ENCODE measurements at regions of chr11 and their contacts with region 1.

Region 1: DNA sequence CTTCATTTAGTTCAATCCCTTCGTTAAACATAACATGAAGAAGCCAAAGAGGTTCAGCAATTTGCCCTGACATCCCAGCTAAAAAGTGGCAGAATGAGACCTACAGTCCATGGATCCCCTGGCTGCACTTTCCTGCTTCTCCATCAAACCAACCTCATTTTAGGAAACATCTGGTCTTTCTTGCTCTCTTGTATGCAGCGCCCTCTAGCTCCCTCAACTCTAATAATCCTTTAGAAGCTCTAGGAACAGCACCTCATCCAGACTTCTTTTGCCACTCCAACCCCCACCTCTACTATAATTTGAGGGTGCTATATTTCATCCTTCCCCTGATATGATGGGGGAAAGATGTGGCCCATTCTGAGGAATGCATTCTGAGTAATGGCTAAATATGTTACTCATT is 7.4 kb downstream of the CNTF start:
- DNase-seq: no peak
- ATAC-seq: peak; percentile 86
- H3K4me3 ChIP-seq: no peak overlapping the region
- H3K27ac ChIP-seq: no peak overlapping the region
- H3K4me1 ChIP-seq: no peaks in the 10 kb centered on the region
- H3K27me3 ChIP-seq: no peaks in the 10 kb centered on the region
- CTCF ChIP-seq: peak; percentile 59 to 70 (median 66)
- EP300 ChIP-seq: no peak
- POLR2A ChIP-seq: no peak
- RAD21 ChIP-seq: peak; percentile 72

Region 2: DNA sequence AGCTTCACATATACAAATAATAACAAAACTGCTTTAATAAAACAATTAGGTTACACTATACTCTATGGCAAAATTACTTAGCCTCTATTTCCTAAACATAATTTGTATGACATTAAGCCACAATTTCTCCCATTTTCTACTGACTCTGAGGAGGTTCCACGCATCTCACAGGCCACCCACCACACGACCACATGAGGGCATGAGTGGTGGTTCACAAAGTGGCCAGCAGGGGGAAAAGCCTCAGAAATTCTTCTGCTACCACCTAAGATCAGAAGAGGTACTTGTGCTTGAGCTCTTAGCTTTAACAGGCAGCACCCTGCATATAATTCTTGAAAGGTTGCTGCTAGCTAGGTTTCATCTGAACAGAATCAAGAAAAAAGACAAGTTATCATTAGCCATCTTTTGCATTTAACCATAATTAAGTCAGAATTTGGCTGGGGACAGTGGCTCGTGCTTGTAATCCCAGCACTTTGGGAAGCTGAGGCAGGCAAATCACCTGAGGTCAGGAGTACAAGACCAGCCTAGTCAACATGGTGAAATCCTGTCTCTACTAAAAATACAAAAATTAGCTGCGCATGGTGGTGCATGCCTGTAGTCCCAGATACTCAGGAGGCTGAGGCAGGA is 61.9 kb before region 1 on chr11:
- CTCF ChIA-PET with region 1: interaction called, 156 read pairs
- POLR2A ChIA-PET with region 1: interaction called, 4 read pairs
- RAD21 ChIA-PET with region 1: interaction called, 61 read pairs
- SMC1A ChIA-PET with region 1: interaction called, 73 read pairs
- in situ Hi-C with region 1: no loop called
- intact Hi-C with region 1: loop called (anchors 5 kb)
- DNase-seq: no peak
- ATAC-seq: peak; percentile 89
- H3K4me3 ChIP-seq: 0 out of 2 replicates have a peak overlapping the region, but pooled peaks have one; percentile 16
- H3K27ac ChIP-seq: no peak overlapping the region
- H3K4me1 ChIP-seq: peaks cover 10% of the 10 kb centered on the region
- H3K27me3 ChIP-seq: no peaks in the 10 kb centered on the region
- CTCF ChIP-seq: peak; percentile 80 to 89 (median 85)
- EP300 ChIP-seq: no peak
- POLR2A ChIP-seq: no peak
- RAD21 ChIP-seq: peak; percentile 59

Region 3: DNA sequence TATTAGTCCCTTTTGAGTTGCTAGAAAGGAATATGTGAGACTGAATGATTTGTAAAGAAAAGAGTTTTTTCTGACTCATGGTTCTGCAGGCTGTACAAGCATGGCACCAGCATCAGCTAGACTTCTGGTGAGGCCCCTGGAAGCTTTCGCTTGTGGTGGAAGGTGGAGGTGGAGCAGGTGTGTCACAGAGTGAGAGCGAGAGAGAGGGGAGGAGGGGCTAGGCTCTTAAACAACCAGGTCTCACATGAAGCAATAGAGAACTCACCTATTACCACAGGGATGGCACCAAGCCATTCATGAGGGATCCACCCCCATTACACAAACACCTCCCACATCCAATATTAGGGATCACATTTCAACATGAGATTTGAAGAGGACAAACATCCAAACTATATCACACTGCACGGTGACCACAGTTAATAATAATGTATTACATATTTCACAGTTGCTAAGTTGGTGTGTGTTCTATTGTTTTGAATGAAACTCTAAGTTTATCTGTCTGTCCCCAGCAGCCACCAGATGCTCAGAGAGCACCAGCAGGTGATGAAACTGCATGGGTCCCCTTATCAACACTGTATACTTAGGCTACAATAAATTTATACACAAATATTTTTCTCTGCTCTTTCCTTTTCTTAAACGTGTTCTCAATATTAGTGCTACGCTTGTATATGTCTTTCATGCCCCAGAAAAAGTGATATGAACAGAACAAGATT is 36.9 kb before region 1 on chr11:
- CTCF ChIA-PET with region 1: interaction called, 20 read pairs
- POLR2A ChIA-PET with region 1: no interaction called
- RAD21 ChIA-PET with region 1: interaction called, 3 read pairs
- SMC1A ChIA-PET with region 1: interaction called, 3 read pairs
- in situ Hi-C with region 1: no loop called
- intact Hi-C with region 1: no loop called
- DNase-seq: no peak
- ATAC-seq: peak; percentile 41
- H3K4me3 ChIP-seq: no peak overlapping the region
- H3K27ac ChIP-seq: no peak overlapping the region
- H3K4me1 ChIP-seq: peaks cover 5% of the 10 kb centered on the region
- H3K27me3 ChIP-seq: no peaks in the 10 kb centered on the region
- CTCF ChIP-seq: no peak
- EP300 ChIP-seq: no peak
- POLR2A ChIP-seq: no peak
- RAD21 ChIP-seq: no peak

Region 4: GRCh38 chr11:58640386-58641023 is 10.6 kb after region 1 on chr11:
- CTCF ChIA-PET with region 1: interaction called, 46 read pairs
- POLR2A ChIA-PET with region 1: no interaction called
- RAD21 ChIA-PET with region 1: interaction called, 17 read pairs
- SMC1A ChIA-PET with region 1: interaction called, 26 read pairs
- in situ Hi-C with region 1: no loop called
- intact Hi-C with region 1: no loop called
- DNase-seq: no peak
- ATAC-seq: peak; percentile 50
- H3K4me3 ChIP-seq: no peak overlapping the region
- H3K27ac ChIP-seq: no peak overlapping the region
- H3K4me1 ChIP-seq: no peaks in the 10 kb centered on the region
- H3K27me3 ChIP-seq: no peaks in the 10 kb centered on the region
- CTCF ChIP-seq: no peak
- EP300 ChIP-seq: no peak
- POLR2A ChIP-seq: no peak
- RAD21 ChIP-seq: no peak

Region 5: DNA sequence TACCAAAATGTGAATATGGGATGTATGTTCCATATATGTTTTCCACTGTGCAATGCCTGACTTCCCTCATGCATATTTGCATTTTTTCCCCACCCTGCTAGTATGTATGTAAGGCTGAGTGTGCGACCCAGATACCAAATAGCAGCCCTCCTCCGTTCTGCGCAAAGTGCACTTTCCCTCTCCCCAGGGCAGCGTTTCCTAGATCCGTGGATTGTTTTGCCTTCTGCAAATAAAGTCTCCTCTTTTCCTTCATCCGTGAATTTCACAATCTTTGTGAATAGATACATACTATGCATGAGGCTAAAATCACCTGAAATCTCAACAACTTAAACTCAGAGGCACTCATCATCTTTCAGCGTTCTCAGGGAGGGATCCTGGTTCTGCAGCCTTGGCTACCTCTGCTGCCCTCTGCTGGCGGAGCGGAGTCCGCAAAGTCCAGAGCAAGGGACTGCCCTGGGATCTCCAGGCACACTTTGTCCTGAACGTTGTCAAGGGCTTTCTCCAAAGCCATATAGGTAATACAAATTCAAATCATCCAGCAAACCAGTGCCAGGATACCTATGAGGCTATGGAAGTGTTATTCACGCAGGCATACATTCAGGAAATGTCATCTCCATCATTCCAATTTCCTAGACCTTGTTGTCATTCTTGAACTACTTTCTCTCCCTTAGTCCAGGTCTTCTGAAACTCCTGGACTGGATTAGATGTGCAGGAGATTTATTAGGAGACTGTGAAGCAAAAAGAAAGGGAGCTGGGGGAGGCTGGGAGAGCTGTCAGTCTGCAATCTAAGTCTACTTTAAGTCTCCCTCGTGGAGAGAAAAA is 45.7 kb after region 1 on chr11:
- CTCF ChIA-PET with region 1: interaction called, 10 read pairs
- POLR2A ChIA-PET with region 1: no interaction called
- RAD21 ChIA-PET with region 1: no interaction called
- SMC1A ChIA-PET with region 1: interaction called, 5 read pairs
- in situ Hi-C with region 1: no loop called
- intact Hi-C with region 1: no loop called
- DNase-seq: no peak
- ATAC-seq: peak; percentile 100
- H3K4me3 ChIP-seq: no peak overlapping the region
- H3K27ac ChIP-seq: no peak overlapping the region
- H3K4me1 ChIP-seq: no peaks in the 10 kb centered on the region
- H3K27me3 ChIP-seq: no peaks in the 10 kb centered on the region
- CTCF ChIP-seq: peak; percentile 91 to 97 (median 97)
- EP300 ChIP-seq: no peak
- POLR2A ChIP-seq: no peak
- RAD21 ChIP-seq: peak; percentile 83